Activated CD8-positive, alpha-beta T cell treated with anti-CD3 and anti-CD28 coated beads, Interleukin-2, amount 10 ng/mL, durations not matched to agents 7 days and 5 days (primary cell): ENCODE measurements at regions of chr15 and their contacts with region 1.

Region 1: DNA sequence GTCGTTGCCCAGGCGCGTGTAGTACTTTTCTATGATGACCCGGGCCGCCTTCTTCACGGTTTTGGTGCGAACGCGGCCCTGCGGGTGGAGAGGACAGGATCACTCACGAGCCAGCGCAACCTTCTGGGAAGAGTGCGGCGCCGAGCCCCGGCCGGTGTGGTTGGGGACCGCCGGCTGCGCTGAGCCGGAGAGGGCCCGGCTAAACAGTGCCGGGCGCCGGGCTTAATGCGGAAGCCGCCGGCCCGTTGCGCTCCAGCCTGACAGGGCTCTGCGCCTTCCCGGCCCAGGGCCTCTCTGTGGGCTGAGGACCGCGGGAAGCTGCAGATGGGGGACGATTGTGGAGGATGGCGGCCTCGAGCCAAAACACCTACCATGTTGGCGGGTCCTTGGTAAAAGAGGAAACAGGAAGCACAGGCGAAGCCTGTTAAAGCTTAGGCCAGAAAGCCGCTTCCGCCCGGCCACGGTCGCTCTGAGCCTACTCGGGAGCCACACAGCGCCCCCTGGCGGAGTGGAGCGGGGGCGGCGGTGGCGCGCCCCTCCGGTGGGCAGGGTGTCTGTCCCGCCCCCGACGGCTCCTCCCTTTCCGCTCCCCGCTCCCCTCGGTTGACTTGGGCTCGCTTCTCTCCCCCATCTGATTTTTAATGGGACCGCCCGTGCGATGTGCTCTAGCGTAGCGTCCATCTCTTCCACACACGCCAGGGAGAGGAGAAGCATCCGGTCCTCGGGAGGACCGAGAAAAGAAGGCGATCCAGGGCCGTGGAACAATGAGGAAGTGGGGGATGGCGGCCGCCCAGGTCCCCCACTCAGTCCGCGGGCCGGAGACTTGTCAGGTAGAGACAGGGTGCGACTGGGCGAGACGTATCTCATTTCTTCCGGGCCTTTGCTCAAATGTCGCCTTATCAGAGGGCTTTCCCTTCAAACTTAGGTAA is at the start of gene RPS17:
- DNase-seq: peak; percentile 98
- ATAC-seq: peak; percentile 96
- H3K4me3 Mint-ChIP-seq: peak within 1 kb of the TSS; percentile 97
- H3K27ac Mint-ChIP-seq: peak within 1 kb of the TSS; percentile 97
- H3K4me1 Mint-ChIP-seq: peaks cover 45% of the 10 kb centered on the region
- H3K27me3 Mint-ChIP-seq: no peaks in the 10 kb centered on the region
- total RNA-seq, gene RPS17: 1,755 to 1,800 TPM

Region 2: DNA sequence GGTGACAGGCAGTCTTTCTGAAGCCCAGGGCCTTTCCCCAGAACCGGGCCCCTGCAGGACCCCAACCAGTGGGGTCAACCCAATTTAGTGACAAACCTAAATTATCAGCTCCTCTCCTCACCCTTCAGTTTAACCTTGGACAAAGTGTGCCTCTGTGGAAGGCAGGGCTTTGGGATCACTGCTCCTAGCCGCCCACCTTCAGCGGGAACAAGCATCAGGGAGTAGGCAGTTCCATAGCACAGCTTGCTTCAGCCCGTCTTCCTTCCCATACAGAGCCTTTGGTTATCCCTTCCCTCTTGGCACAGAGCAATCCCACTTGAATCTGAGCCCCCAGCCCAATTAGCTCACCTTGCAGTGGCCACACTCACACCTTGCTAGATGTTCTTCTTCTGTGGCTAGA is 174.7 kb after region 1 on chr15:
- CTCF ChIA-PET with region 1: no interaction called
- POLR2A ChIA-PET with region 1: no interaction called
- DNase-seq: no peak
- ATAC-seq: no peak
- H3K4me3 Mint-ChIP-seq: no peak overlapping the region
- H3K27ac Mint-ChIP-seq: no peak overlapping the region
- H3K4me1 Mint-ChIP-seq: no peaks in the 10 kb centered on the region
- H3K27me3 Mint-ChIP-seq: peaks cover 4% of the 10 kb centered on the region

Region 3: GRCh38 chr15:82749951-82750830 is 209.9 kb after region 1 on chr15:
- CTCF ChIA-PET with region 1: interaction called, 7 read pairs
- POLR2A ChIA-PET with region 1: interaction called, 11 read pairs
- DNase-seq: peak; percentile 90
- ATAC-seq: peak; percentile 97
- H3K4me3 Mint-ChIP-seq: peak overlapping the region; percentile 96
- H3K27ac Mint-ChIP-seq: peak overlapping the region; percentile 96
- H3K4me1 Mint-ChIP-seq: peaks cover 34% of the 10 kb centered on the region
- H3K27me3 Mint-ChIP-seq: no peaks in the 10 kb centered on the region

Region 4: GRCh38 chr15:82985688-82986441 is 445.5 kb after region 1 on chr15 and contains the start of gene RAMAC:
- CTCF ChIA-PET with region 1: interaction called, 10 read pairs
- POLR2A ChIA-PET with region 1: interaction called, 8 read pairs
- DNase-seq: peak; percentile 95
- ATAC-seq: peak; percentile 93
- H3K4me3 Mint-ChIP-seq: peak within 1 kb of the TSS; percentile 98
- H3K27ac Mint-ChIP-seq: peak within 1 kb of the TSS; percentile 97
- H3K4me1 Mint-ChIP-seq: peaks cover 36% of the 10 kb centered on the region
- H3K27me3 Mint-ChIP-seq: no peaks in the 10 kb centered on the region
- total RNA-seq, gene RAMAC: 25.8 to 27.0 TPM